Naive thymus-derived CD4-positive, alpha-beta T cell (primary cell): ENCODE measurements at regions of chr6 and their contacts with region 1.

Region 1: GRCh38 chr6:106223300-106223930 is 102.1 kb downstream of the ATG5 start:
- DNase-seq: peak; percentile 18 to 76 (median 65)
- ATAC-seq: peak; percentile 91
- H3K4me3 ChIP-seq: no peak overlapping the region
- H3K4me3 Mint-ChIP-seq: no peak overlapping the region
- H3K27ac ChIP-seq: no peak overlapping the region
- H3K27ac Mint-ChIP-seq: peak overlapping the region in 2 of 9 donors; percentile 5 to 61
- H3K4me1 ChIP-seq: no peaks in the 10 kb centered on the region
- H3K4me1 Mint-ChIP-seq: peaks cover 9 to 25% (median 17%) of the 10 kb centered on the region in 7 donors
- H3K27me3 ChIP-seq: no peaks in the 10 kb centered on the region
- H3K27me3 Mint-ChIP-seq: no peaks in the 10 kb centered on the region

Region 2: DNA sequence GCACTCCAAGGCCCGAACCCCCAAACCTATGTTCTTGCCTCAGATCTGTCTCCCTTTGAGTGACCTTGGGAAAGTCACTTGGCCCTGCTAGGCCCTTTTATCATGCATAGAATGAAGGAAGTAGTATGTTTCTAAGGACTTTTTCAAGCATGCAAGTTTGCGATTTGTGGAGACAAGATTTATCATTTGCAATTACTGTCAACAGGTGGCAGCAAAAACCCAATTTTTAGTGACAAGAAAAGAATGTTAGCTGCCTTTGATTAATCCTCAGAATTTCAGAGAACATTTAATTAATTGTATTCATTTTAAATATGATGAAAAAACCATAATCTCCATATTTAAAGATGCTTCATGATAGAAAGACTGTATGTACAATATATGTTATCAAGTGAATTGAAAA is 792.2 kb before region 1 on chr6:
- CTCF ChIA-PET with region 1: interaction called, 13 read pairs
- POLR2A ChIA-PET with region 1: no interaction called
- intact Hi-C with region 1: loop called (anchors 1 kb)
- DNase-seq: peak in 6 of 9 donors; percentile 4 to 43 (median 34)
- ATAC-seq: no peak
- H3K4me3 ChIP-seq: no peak overlapping the region
- H3K4me3 Mint-ChIP-seq: no peak overlapping the region
- H3K27ac ChIP-seq: no peak overlapping the region
- H3K27ac Mint-ChIP-seq: no peak overlapping the region
- H3K4me1 ChIP-seq: no peaks in the 10 kb centered on the region
- H3K4me1 Mint-ChIP-seq: peaks cover 0 to 3% (median 0%) of the 10 kb centered on the region in 7 donors
- H3K27me3 ChIP-seq: no peaks in the 10 kb centered on the region
- H3K27me3 Mint-ChIP-seq: peaks cover 0 to 36% (median 7%) of the 10 kb centered on the region in 5 donors

Region 3: GRCh38 chr6:105733565-105734162 is 489.8 kb before region 1 on chr6:
- CTCF ChIA-PET with region 1: interaction called, 28 read pairs
- POLR2A ChIA-PET with region 1: no interaction called
- intact Hi-C with region 1: loop called (anchors 1 kb)
- DNase-seq: peak in 6 of 9 donors; percentile 10 to 41 (median 34)
- ATAC-seq: no peak
- H3K4me3 ChIP-seq: no peak overlapping the region
- H3K4me3 Mint-ChIP-seq: no peak overlapping the region
- H3K27ac ChIP-seq: no peak overlapping the region
- H3K27ac Mint-ChIP-seq: no peak overlapping the region
- H3K4me1 ChIP-seq: no peaks in the 10 kb centered on the region
- H3K4me1 Mint-ChIP-seq: peaks cover 0 to 36% (median 8%) of the 10 kb centered on the region in 7 donors
- H3K27me3 ChIP-seq: no peaks in the 10 kb centered on the region
- H3K27me3 Mint-ChIP-seq: peaks cover 0 to 8% (median 0%) of the 10 kb centered on the region in 5 donors

Region 4: DNA sequence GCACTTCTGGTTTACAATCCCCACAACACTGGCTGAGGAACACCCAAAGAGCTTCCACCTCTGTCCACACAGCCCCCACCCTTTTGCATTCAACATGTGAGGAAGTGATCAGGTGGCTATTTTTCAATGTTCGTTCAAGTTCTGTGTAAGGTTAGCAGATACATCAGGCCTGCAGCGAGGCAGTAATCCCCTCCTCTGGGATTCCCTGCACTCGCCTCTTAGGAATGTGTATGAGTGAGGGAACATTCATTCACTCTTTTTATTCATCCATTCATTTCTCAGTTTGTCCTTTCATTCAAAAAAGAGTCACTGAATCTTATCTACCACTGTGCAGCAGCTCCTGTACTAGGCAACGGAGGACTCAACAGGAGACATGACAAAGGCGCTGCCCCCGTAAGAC is 373.7 kb before region 1 on chr6:
- CTCF ChIA-PET with region 1: interaction called, 6 read pairs
- POLR2A ChIA-PET with region 1: no interaction called
- intact Hi-C with region 1: loop called in 1 of 2 experiments (anchors 5 kb)
- DNase-seq: no peak
- ATAC-seq: no peak
- H3K4me3 ChIP-seq: no peak overlapping the region
- H3K4me3 Mint-ChIP-seq: no peak overlapping the region
- H3K27ac ChIP-seq: no peak overlapping the region
- H3K27ac Mint-ChIP-seq: no peak overlapping the region
- H3K4me1 ChIP-seq: no peaks in the 10 kb centered on the region
- H3K4me1 Mint-ChIP-seq: no peaks in the 10 kb centered on the region
- H3K27me3 ChIP-seq: no peaks in the 10 kb centered on the region
- H3K27me3 Mint-ChIP-seq: peaks cover 0 to 2% (median 0%) of the 10 kb centered on the region in 5 donors

Region 5: GRCh38 chr6:106069478-106069877 is 153.9 kb before region 1 on chr6:
- CTCF ChIA-PET with region 1: no interaction called
- POLR2A ChIA-PET with region 1: no interaction called
- intact Hi-C with region 1: no loop called
- DNase-seq: no peak
- ATAC-seq: no peak
- H3K4me3 ChIP-seq: no peak overlapping the region
- H3K4me3 Mint-ChIP-seq: no peak overlapping the region
- H3K27ac ChIP-seq: no peak overlapping the region
- H3K27ac Mint-ChIP-seq: peak overlapping the region in 1 of 9 donors; percentile 21
- H3K4me1 ChIP-seq: no peaks in the 10 kb centered on the region
- H3K4me1 Mint-ChIP-seq: peaks cover 0 to 5% (median 0%) of the 10 kb centered on the region in 7 donors
- H3K27me3 ChIP-seq: no peaks in the 10 kb centered on the region
- H3K27me3 Mint-ChIP-seq: peaks cover 0 to 42% (median 0%) of the 10 kb centered on the region in 5 donors

Region 6: DNA sequence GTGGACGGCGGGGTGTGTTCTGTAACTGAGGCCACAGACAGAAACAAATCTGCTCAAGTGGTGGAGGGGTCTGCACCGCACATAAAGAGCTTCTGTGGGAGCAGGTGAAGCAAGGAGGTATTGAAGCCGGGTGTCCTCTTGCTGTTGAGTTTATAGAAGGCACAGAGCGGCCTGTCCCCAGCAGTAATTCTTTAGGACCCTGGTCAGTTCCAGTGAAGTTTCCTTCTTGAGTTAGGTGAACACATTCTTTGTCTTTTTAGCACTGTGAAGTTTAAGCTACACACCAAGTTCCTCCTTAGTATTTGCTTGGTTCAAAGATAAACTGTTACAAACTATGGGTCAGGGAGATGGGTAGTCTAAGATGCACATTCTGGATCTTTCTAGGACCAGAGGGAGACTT is 131.1 kb before region 1 on chr6:
- CTCF ChIA-PET with region 1: interaction called, 21 read pairs
- POLR2A ChIA-PET with region 1: interaction called, 4 read pairs
- intact Hi-C with region 1: loop called (anchors 1 kb)
- DNase-seq: no peak
- ATAC-seq: no peak
- H3K4me3 ChIP-seq: no peak overlapping the region
- H3K4me3 Mint-ChIP-seq: peak overlapping the region in 1 of 10 donors; percentile 56
- H3K27ac ChIP-seq: no peak overlapping the region
- H3K27ac Mint-ChIP-seq: peak overlapping the region in 1 of 9 donors; percentile 70
- H3K4me1 ChIP-seq: peaks cover 29 to 73% of the 10 kb centered on the region in 2 donors
- H3K4me1 Mint-ChIP-seq: peaks cover 33 to 90% (median 67%) of the 10 kb centered on the region in 7 donors
- H3K27me3 ChIP-seq: peaks cover 0 to 14% of the 10 kb centered on the region in 2 donors
- H3K27me3 Mint-ChIP-seq: peaks cover 0 to 36% (median 14%) of the 10 kb centered on the region in 5 donors

Region 7: GRCh38 chr6:106141441-106142237 is 81.8 kb before region 1 on chr6:
- CTCF ChIA-PET with region 1: no interaction called
- POLR2A ChIA-PET with region 1: no interaction called
- intact Hi-C with region 1: loop called in 1 of 2 experiments (anchors 5 kb)
- DNase-seq: peak in 4 of 9 donors; percentile 28 to 46 (median 30)
- ATAC-seq: peak; percentile 77
- H3K4me3 ChIP-seq: peak overlapping the region; percentile 11
- H3K4me3 Mint-ChIP-seq: peak overlapping the region; percentile 47 to 83 (median 69)
- H3K27ac ChIP-seq: peak overlapping the region; percentile 36
- H3K27ac Mint-ChIP-seq: peak overlapping the region; percentile 6 to 91 (median 67)
- H3K4me1 ChIP-seq: peaks cover 23 to 35% of the 10 kb centered on the region in 2 donors
- H3K4me1 Mint-ChIP-seq: peaks cover 17 to 60% (median 33%) of the 10 kb centered on the region in 7 donors
- H3K27me3 ChIP-seq: no peaks in the 10 kb centered on the region
- H3K27me3 Mint-ChIP-seq: no peaks in the 10 kb centered on the region